Activated B cell treated with CpG ODN at 0.5 μM for 24 hours (primary cell): ENCODE measurements at regions of chr20 and their contacts with region 1.

Region 1: GRCh38 chr20:53692413-53693067 is 98.9 kb upstream of the ZNF217 start:
- DNase-seq: no peak
- ATAC-seq: no peak
- H3K4me3 Mint-ChIP-seq: no peak overlapping the region
- H3K27ac Mint-ChIP-seq: no peak overlapping the region
- H3K4me1 Mint-ChIP-seq: peaks cover 15% of the 10 kb centered on the region
- H3K27me3 Mint-ChIP-seq: no peaks in the 10 kb centered on the region
- CTCF ChIP-seq: no peak

Region 2: DNA sequence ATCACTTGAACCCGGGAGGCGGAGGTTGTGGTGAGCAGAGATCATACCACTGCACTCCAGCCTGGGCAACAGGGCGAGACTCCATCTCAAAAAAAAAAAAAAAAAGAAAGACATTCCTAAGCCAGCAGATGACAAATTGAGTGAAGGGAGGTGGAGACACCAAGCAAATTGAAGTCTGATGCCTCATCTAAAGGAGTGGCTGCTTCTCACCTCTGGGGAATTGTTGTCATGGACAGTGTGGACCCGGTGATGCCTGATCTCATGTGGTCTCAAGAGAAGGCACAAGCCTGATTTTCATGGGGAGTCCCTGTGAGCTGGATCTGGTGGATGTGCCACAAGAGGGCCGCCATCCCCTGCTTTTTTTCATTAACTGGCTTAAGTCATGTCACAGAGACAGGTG is 370.9 kb before region 1 on chr20:
- CTCF ChIA-PET with region 1: no interaction called
- POLR2A ChIA-PET with region 1: no interaction called
- intact Hi-C with region 1: no loop called
- DNase-seq: no peak
- ATAC-seq: no peak
- H3K4me3 Mint-ChIP-seq: no peak overlapping the region
- H3K27ac Mint-ChIP-seq: no peak overlapping the region
- H3K4me1 Mint-ChIP-seq: no peaks in the 10 kb centered on the region
- H3K27me3 Mint-ChIP-seq: no peaks in the 10 kb centered on the region
- CTCF ChIP-seq: no peak

Region 3: GRCh38 chr20:53643031-53643832 is 49.3 kb before region 1 on chr20:
- CTCF ChIA-PET with region 1: no interaction called
- POLR2A ChIA-PET with region 1: interaction called, 10 read pairs
- intact Hi-C with region 1: no loop called
- DNase-seq: no peak
- ATAC-seq: peak; percentile 94
- H3K4me3 Mint-ChIP-seq: peak overlapping the region; percentile 78
- H3K27ac Mint-ChIP-seq: peak overlapping the region; percentile 94
- H3K4me1 Mint-ChIP-seq: peaks cover 36% of the 10 kb centered on the region
- H3K27me3 Mint-ChIP-seq: no peaks in the 10 kb centered on the region
- CTCF ChIP-seq: no peak

Region 4: GRCh38 chr20:53677447-53678314 is 14.9 kb before region 1 on chr20:
- CTCF ChIA-PET with region 1: no interaction called
- POLR2A ChIA-PET with region 1: no interaction called
- intact Hi-C with region 1: loop called (anchors 2 kb)
- DNase-seq: no peak
- ATAC-seq: no peak
- H3K4me3 Mint-ChIP-seq: peak overlapping the region; percentile 17
- H3K27ac Mint-ChIP-seq: peak overlapping the region; percentile 54
- H3K4me1 Mint-ChIP-seq: peaks cover 26% of the 10 kb centered on the region
- H3K27me3 Mint-ChIP-seq: no peaks in the 10 kb centered on the region
- CTCF ChIP-seq: no peak

Region 5: DNA sequence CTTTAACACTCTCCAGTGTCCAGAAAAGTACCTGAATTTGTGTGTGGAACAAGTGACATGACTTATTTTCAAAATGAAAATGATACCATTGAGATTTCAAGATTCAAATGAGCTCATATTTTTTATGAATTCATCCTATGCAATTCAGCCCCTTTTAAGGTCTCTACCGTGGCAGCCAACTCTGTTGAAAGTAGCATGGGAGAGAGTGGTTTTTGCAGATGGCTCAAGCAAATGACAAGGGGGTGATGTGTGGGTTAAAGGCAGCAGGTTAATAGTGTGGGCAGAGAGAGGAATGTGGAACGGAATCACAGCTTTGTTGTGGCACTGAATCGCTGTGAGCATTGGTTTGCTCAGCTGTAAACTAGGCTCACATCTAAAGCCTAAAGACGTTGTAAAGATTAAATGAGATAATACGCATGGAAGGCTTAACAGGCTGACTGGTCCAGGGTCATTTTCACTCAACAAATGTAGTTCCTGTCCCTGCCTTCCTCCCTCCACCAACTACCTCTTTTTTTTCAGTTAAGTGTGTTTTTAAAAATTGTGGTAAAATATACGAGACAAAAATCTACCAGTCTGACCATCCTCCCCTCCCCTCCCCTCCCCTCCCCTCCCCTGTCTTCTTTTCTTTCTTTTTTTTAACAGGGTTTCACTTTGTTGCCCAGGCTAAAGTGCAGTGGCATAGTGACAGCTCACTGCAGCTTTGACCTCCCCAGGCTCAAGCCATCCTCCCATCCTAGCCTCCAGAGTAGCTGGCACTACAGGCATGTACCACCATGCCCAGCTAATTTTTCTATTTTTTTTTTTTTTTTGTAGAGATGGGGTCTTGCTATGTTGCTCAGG is 15.8 kb after region 1 on chr20:
- CTCF ChIA-PET with region 1: interaction called, 3 read pairs
- POLR2A ChIA-PET with region 1: interaction called, 12 read pairs
- intact Hi-C with region 1: loop called (anchors 2 kb)
- DNase-seq: no peak
- ATAC-seq: peak; percentile 60
- H3K4me3 Mint-ChIP-seq: peak overlapping the region; percentile 62
- H3K27ac Mint-ChIP-seq: peak overlapping the region; percentile 96
- H3K4me1 Mint-ChIP-seq: peaks cover 44% of the 10 kb centered on the region
- H3K27me3 Mint-ChIP-seq: no peaks in the 10 kb centered on the region
- CTCF ChIP-seq: no peak